GM13976 (cell line): ENCODE measurements at regions of chr3 and their contacts with region 1.

Region 1: GRCh38 chr3:152477422-152477821 is 208.7 kb downstream of the MBNL1 start:
- DNase-seq: no peak
- CTCF ChIP-seq: no peak

Region 2: GRCh38 chr3:152222327-152222726 is 255.1 kb before region 1 on chr3:
- in situ Hi-C with region 1: no loop called
- DNase-seq: peak; percentile 53
- CTCF ChIP-seq: no peak

Region 3: GRCh38 chr3:152519376-152519775 is 42.0 kb after region 1 on chr3:
- in situ Hi-C with region 1: loop called (anchors 5 kb)
- DNase-seq: no peak
- CTCF ChIP-seq: no peak

Region 4: DNA sequence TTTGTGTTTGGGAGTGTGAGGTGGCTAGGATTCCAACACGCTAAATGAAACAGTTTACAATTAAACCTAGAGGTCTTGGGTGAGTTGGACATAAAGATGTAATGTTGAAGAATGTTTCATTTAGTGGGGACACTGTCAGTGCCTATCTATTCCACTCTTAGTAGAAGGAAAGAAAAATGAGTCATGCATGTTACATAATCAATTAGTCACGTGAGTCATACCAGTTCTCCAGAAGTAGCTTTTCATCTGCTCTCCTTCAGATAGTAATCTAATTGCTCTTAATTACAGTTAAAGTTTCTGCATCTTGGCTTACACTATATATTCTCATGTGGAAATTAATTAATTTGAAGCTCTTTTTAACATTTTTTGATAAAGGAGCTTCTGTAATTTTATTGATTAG is 241.8 kb after region 1 on chr3:
- in situ Hi-C with region 1: no loop called
- DNase-seq: no peak
- CTCF ChIP-seq: no peak